ENCODE measurements at regions of chr14 and their contacts with region 1.

Region 1: DNA sequence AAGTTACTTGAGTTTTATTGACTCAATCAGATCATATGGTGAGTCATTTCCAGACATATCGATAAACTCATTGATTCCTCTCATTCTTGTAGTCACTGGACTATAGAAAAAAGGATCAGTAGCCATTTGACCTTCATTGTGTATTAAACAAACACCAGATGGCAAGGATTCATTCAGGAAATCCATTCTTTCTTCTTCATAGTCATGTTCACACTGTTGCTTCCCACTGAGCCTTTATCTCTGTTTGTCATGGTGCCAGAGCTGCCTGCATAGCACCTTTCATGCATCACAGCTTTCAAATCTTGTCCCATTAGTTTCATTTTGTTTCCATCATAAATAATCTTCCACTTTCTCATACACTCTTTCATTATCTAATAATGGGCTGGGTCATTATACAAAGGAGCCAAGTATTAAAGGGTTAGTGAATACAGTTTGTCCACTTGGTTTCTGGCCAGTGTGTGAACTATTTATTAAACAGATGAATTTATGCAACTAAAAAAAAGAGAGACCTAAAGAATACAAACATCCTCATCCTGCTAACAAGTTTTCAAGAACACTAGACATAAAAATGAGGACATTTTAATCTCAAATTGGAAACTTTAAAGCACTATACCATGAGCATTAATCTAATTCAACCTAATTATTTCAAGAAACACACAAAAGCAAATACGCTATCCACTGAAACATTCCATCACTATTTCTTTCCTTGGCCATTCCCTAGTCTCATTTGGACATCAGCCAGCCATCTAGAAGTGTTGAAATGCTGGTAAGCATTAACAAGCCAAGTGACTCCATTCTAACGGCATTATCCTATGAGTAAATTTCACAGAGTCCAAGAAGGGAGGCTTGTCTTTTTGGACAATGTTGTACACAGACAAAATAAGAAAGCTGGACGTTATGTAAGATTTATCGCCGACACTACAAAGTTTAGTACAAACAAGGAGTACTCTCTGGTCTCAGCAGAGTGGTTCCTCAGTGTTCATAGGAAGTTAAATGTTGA is 476.5 kb downstream of the FOXG1 start:
- DNase-seq: peak; percentile 87
- H3K4me3 ChIP-seq: no peak overlapping the region
- H3K27ac ChIP-seq: no peak overlapping the region
- H3K4me1 ChIP-seq: peaks cover 39% of the 10 kb centered on the region
- H3K27me3 ChIP-seq: no peaks in the 10 kb centered on the region
- CTCF ChIP-seq: no peak

Region 2: DNA sequence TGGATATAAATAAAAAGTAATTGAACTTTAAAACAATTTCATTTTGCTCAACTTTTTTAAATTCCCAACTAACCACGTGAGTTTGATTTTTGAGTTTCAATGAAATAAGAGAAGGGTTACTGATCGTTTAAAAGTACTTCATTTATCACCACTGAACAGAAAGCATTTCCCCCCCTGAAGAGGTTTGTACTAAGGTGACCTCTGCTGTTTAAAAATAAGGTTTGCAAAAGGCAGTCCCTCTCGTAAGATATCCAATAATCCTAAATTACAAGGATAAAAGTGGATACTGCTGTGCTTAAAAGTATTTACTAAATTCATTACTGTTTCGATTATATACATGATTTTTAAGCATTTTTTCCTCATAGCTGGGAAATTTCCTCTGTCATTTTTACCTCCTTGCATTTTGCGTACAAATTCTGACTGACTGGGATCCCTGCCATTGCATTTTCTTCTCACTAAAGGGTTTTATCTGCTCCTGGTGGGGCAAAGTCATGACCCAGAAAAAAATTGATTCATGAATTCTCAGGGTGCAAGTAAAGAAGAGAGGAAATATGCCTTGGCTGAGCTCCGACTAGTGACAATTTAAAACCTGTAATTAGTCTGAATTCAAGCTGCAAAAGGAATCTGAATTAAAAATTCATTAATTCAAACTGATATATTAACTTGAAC is 220.8 kb after region 1 on chr14:
- CTCF ChIA-PET with region 1: no interaction called
- POLR2A ChIA-PET with region 1: no interaction called
- intact Hi-C with region 1: loop called (anchors 5 kb)
- DNase-seq: peak; percentile 33
- H3K4me3 ChIP-seq: no peak overlapping the region
- H3K27ac ChIP-seq: no peak overlapping the region
- H3K4me1 ChIP-seq: peaks cover 13% of the 10 kb centered on the region
- H3K27me3 ChIP-seq: peaks cover 16% of the 10 kb centered on the region
- CTCF ChIP-seq: peak; percentile 36; the same call in 1 of the 2 replicates

Region 3: GRCh38 chr14:29529418-29529817 is 286.4 kb after region 1 on chr14:
- CTCF ChIA-PET with region 1: no interaction called
- POLR2A ChIA-PET with region 1: no interaction called
- intact Hi-C with region 1: loop called (anchors 5 kb)
- DNase-seq: peak; percentile 60
- H3K4me3 ChIP-seq: no peak overlapping the region
- H3K27ac ChIP-seq: no peak overlapping the region
- H3K4me1 ChIP-seq: peaks cover 12% of the 10 kb centered on the region
- H3K27me3 ChIP-seq: no peaks in the 10 kb centered on the region
- CTCF ChIP-seq: peak; percentile 62

Region 4: DNA sequence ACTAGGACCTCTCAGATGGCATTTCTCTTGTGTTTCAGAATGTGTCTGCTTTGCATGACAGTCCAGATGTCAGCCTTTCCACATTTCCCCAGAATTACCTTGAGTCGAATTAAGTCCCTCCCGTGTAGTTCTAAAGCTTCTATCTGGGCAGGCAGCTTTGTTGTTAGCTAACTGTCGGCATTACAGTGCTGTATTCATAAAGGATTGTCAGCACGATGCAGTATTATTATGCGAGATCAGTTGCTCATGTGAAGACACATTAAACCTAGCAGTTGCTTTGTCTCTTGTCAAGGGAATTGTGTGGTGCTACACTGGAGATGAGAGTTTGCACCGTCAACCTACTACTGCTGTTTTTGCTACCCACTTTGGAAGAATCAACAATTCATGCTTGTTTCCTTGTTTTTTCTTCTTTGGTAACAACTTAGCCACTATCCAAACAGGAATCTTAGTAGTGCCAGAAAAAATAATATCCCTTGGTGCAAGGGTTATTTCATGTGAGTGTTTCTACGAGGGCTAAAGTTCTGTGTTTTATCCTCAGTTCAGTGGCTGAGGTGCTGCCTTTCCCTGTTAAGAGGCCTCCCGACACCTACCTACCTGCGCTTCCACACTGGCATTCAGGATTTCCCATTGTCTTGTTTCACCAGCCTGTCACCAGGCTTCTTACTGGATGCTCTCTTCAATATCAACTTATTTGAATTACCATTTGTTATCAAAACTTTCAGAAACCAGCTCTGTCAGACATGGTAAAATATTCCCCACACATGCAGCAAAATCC is 1018.0 kb after region 1 on chr14:
- CTCF ChIA-PET with region 1: no interaction called
- POLR2A ChIA-PET with region 1: no interaction called
- intact Hi-C with region 1: no loop called
- DNase-seq: no peak
- H3K4me3 ChIP-seq: no peak overlapping the region
- H3K27ac ChIP-seq: no peak overlapping the region
- H3K4me1 ChIP-seq: no peaks in the 10 kb centered on the region
- H3K27me3 ChIP-seq: peaks cover 48% of the 10 kb centered on the region
- CTCF ChIP-seq: no peak